MCF 10A (cell line): ENCODE measurements at regions of chr16 and their contacts with region 1.

Region 1: GRCh38 chr16:81204798-81205680 is 33.5 kb upstream of the BCO1 start:
- DNase-seq: peak; percentile 50
- H3K4me3 Mint-ChIP-seq: no peak overlapping the region
- H3K27ac Mint-ChIP-seq: no peak overlapping the region
- H3K4me1 Mint-ChIP-seq: no peaks in the 10 kb centered on the region
- H3K27me3 Mint-ChIP-seq: peaks cover 10% of the 10 kb centered on the region
- CTCF ChIP-seq: peak; percentile 54

Region 2: DNA sequence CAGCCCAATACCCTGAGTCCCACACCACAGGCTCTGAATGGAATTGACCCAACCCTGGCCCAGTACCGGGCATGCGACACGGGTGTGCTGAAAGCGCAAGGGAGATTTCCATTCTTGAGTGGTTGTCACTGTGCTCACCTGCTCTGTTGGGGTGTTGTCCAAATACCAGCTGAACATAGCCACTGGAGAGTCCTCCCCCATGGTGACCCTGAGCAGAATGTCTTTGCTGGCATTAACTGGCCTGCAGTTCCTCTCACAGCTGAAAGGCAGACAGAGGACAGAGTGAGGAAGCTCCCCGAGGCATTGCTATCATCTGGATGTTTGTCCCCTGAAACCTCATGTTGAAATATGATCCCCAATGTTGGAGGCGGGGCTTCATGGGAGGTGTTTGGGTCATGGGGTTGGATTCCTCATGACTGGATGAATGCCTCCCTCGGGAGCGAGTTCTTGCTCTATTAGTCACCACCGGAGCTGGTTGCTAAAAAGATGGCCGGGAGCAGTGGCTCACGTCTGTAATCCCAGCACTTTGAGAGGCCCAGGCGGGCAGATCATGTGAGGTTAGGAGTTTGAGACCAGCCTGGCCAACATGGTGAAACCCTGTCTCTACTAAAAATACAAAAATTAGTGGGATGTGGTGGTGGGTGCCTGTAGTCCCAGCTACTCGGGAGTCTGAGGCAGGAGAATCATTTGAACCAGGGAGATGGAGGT is 23.9 kb before region 1 on chr16:
- CTCF ChIA-PET with region 1: interaction called, 13 read pairs
- POLR2A ChIA-PET with region 1: no interaction called
- intact Hi-C with region 1: no loop called
- DNase-seq: peak; percentile 98
- H3K4me3 Mint-ChIP-seq: peak overlapping the region; percentile 55
- H3K27ac Mint-ChIP-seq: peak overlapping the region; percentile 93
- H3K4me1 Mint-ChIP-seq: peaks cover 13% of the 10 kb centered on the region
- H3K27me3 Mint-ChIP-seq: no peaks in the 10 kb centered on the region
- CTCF ChIP-seq: no peak

Region 3: DNA sequence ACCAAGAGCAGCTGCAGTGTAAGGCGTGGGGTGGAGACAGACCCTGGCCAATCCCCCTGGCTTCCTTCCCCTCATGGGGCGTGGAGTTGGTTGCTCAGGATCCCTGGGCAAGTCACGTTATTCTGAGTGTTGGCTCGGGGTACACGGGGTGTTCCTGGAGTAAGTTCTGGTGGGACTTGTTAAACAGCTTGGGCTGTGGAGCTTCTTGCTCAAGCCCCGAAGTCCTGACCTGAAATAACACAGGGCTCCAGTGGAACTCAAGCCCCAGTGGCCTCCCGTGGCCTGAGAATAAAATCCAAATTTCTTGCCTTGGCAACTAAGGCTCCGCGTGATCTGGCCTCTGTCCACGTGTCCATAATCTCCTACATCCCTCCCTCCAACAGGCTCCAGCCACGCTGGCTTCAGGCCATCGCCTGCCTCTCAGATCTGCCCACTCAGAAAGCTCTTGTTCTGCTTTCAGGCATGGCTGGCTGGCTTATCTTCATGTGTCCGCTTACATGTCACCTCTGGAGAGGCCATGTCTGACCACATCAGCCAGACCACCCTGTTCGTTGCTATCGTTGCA is 15.9 kb before region 1 on chr16:
- CTCF ChIA-PET with region 1: interaction called, 17 read pairs
- POLR2A ChIA-PET with region 1: no interaction called
- intact Hi-C with region 1: no loop called
- DNase-seq: no peak
- H3K4me3 Mint-ChIP-seq: no peak overlapping the region
- H3K27ac Mint-ChIP-seq: no peak overlapping the region
- H3K4me1 Mint-ChIP-seq: no peaks in the 10 kb centered on the region
- H3K27me3 Mint-ChIP-seq: no peaks in the 10 kb centered on the region
- CTCF ChIP-seq: no peak

Region 4: DNA sequence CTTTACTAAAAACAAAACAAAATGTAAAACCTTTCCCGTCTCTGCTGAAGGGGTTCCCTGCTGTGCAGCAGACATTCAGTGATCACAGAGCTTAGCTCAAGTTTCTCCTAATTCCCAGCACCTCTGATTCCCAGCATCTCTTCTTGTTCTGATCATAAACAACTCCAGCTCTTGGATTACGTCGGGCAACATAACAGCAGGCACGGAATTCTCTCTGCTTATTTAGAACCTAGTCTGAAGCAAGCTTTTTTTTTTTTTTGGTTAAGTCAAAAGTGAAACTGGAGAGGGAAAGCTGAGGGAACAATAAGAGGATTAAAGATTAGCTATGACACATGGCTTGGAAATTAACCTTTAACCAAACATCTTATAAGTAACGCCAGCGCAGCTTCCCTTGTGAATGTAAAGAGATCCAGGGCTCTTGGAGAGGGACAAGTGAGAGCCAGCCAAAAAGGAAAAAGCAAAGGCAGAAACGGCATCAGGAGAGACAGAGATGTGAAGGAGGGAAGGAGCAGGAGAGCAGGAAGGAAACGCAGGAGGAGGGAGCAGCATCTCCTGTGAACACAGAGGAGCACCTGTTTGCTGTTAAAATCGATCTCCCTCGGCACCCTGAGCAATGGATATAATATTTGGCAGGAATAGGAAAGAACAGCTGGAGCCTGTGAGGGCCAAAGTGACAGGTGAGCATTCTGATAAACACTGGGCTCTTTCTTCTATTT is 33.4 kb after region 1 on chr16 and contains the start of gene BCO1:
- CTCF ChIA-PET with region 1: interaction called, 12 read pairs
- POLR2A ChIA-PET with region 1: interaction called, 3 read pairs
- intact Hi-C with region 1: no loop called
- DNase-seq: peak; percentile 25
- H3K4me3 Mint-ChIP-seq: peak within 1 kb of the TSS; percentile 67
- H3K27ac Mint-ChIP-seq: peak within 1 kb of the TSS; percentile 86
- H3K4me1 Mint-ChIP-seq: peaks cover 14% of the 10 kb centered on the region
- H3K27me3 Mint-ChIP-seq: no peaks in the 10 kb centered on the region
- CTCF ChIP-seq: no peak
- total RNA-seq, gene BCO1: not detected in 2 replicates

Region 5: DNA sequence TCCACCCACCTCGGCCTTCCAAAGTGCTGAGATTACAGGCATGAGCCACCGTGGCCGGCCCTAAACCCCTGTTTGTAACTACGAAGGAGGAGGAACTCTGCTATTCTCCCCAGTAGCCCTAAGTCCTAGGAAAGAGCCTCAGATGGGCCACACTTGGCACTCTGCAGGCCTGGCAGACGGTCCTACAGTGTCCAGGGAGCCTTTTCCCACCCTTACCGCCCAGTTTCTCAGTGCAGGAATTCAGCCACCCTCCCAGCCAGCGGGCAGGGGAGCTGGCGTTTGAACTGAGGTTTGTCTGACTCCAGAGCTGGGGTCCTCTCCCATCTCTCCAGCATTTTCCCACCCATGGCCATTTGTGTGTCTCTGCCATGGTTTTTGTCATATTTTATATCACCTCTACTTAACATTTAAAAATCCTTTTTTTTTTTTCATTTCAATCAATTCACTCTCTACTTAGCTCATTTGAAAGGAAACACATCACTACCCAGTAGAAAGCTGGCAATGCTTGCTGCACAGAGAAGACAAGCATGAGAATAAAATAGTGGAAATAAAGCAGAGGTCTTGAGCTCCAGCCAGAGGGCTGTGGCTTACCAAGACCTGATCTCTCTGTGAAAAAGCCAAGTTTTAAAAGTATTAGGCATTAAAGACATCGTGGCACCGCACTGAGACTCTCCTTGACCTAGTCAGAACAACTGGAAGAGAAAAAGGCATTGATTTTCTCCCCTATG is 68.3 kb after region 1 on chr16:
- CTCF ChIA-PET with region 1: interaction called, 10 read pairs
- POLR2A ChIA-PET with region 1: no interaction called
- intact Hi-C with region 1: no loop called
- DNase-seq: no peak
- H3K4me3 Mint-ChIP-seq: no peak overlapping the region
- H3K27ac Mint-ChIP-seq: no peak overlapping the region
- H3K4me1 Mint-ChIP-seq: peaks cover 5% of the 10 kb centered on the region
- H3K27me3 Mint-ChIP-seq: no peaks in the 10 kb centered on the region
- CTCF ChIP-seq: no peak

Region 6: GRCh38 chr16:81723098-81723723 is 518.2 kb after region 1 on chr16:
- CTCF ChIA-PET with region 1: interaction called, 5 read pairs
- POLR2A ChIA-PET with region 1: no interaction called
- intact Hi-C with region 1: loop called (anchors 2 kb)
- DNase-seq: peak; percentile 86
- H3K4me3 Mint-ChIP-seq: no peak overlapping the region
- H3K27ac Mint-ChIP-seq: no peak overlapping the region
- H3K4me1 Mint-ChIP-seq: peaks cover 15% of the 10 kb centered on the region
- H3K27me3 Mint-ChIP-seq: no peaks in the 10 kb centered on the region
- CTCF ChIP-seq: peak; percentile 68

Region 7: DNA sequence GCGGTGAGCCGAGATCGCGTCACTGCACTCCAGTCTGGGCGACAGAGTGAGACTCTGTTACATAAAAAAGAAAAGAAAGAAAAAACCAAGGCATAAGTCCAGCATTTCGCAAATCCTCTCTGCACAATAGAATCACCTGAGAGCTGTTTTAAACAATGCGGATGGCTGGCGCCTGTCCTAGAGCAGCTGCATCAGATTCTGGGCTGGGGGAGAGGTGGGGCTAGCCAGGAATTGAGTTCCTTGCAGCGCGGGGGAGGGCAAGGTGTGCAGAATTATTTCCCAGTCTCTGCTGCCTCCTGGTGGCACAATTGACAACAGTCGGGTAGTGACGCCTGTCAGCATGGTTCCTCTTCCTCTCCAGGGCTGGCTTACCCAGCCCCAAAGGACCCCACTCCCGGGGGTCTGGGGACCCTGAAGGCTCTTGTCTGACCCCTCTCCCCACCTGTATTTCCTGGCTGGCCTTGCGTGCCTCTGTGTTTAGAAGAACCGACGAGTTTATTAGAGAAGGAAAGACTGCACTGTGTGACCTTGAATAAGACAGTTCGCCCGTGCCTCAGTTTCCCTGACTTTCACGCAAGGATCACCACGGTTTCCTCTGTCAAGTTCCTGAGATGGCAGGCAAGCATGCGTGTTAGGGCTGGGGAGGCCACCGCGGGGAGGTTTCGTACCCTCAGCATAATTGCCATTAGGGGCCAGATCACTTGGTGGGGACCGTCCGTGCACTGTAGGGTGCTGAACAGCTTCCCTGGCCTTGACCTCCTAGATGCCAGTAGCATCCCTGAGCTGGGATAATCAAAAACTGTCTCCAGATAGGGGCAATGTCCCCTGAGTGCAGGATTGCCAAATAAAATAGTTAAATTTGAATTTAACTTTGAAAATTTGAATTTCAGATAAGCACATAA is 533.1 kb after region 1 on chr16:
- CTCF ChIA-PET with region 1: interaction called, 3 read pairs
- POLR2A ChIA-PET with region 1: no interaction called
- intact Hi-C with region 1: loop called (anchors 2 kb)
- DNase-seq: peak; percentile 96
- H3K4me3 Mint-ChIP-seq: peak overlapping the region; percentile 52
- H3K27ac Mint-ChIP-seq: peak overlapping the region; percentile 51
- H3K4me1 Mint-ChIP-seq: no peaks in the 10 kb centered on the region
- H3K27me3 Mint-ChIP-seq: no peaks in the 10 kb centered on the region
- CTCF ChIP-seq: peak; percentile 86